Naive thymus-derived CD4-positive, alpha-beta T cell (primary cell): ENCODE measurements at regions of chrX and their contacts with region 1.

Region 1: GRCh38 chrX:56729152-56729850 is at the start of gene NBDY:
- DNase-seq: peak in 7 of 9 donors; percentile 21 to 55 (median 40)
- ATAC-seq: peak; percentile 84
- H3K4me3 ChIP-seq: peak within 1 kb of the TSS; percentile 94
- H3K4me3 Mint-ChIP-seq: peak within 1 kb of the TSS; percentile 80 to 96 (median 90)
- H3K27ac ChIP-seq: peak within 1 kb of the TSS; percentile 95
- H3K27ac Mint-ChIP-seq: peak within 1 kb of the TSS; percentile 89 to 96 (median 95)
- H3K4me1 ChIP-seq: peaks cover 0 to 3% of the 10 kb centered on the region in 2 donors
- H3K4me1 Mint-ChIP-seq: peaks cover 3 to 43% (median 34%) of the 10 kb centered on the region in 7 donors
- H3K27me3 ChIP-seq: no peaks in the 10 kb centered on the region
- H3K27me3 Mint-ChIP-seq: no peaks in the 10 kb centered on the region
- total RNA-seq, gene NBDY: 24.9 to 45.8 (median 31.7) TPM

Region 2: GRCh38 chrX:55907968-55908607 is 821.2 kb before region 1 on chrX:
- CTCF ChIA-PET with region 1: no interaction called
- POLR2A ChIA-PET with region 1: no interaction called
- intact Hi-C with region 1: loop called (anchors 5 kb)
- DNase-seq: peak; percentile 7 to 50 (median 44)
- ATAC-seq: peak; percentile 80
- H3K4me3 ChIP-seq: peak overlapping the region; percentile 83
- H3K4me3 Mint-ChIP-seq: peak overlapping the region; percentile 80 to 97 (median 94)
- H3K27ac ChIP-seq: peak overlapping the region; percentile 61
- H3K27ac Mint-ChIP-seq: peak overlapping the region; percentile 53 to 93 (median 85)
- H3K4me1 ChIP-seq: no peaks in the 10 kb centered on the region
- H3K4me1 Mint-ChIP-seq: peaks cover 6 to 32% (median 16%) of the 10 kb centered on the region in 7 donors
- H3K27me3 ChIP-seq: no peaks in the 10 kb centered on the region
- H3K27me3 Mint-ChIP-seq: no peaks in the 10 kb centered on the region

Region 3: DNA sequence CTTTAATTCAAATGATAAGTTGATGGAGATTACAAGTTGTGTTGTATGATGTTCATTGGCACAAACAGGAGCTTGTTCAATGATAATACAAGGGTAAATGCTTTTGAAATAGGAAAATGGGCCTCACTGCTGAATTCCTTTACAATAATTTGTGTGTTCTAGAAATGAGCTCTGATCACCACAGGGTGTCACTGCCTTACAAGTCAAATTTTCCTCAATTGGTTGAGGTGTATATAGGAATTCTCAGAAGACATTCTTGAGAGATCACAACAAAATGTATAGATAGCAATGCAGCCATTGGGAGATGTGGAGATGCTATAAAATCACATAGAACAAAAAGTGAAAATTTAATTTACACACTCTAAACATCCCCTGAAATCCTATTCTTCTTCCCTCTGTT is 447.5 kb before region 1 on chrX:
- CTCF ChIA-PET with region 1: interaction called, 121 read pairs
- POLR2A ChIA-PET with region 1: interaction called, 4 read pairs
- intact Hi-C with region 1: loop called (anchors 1 kb)
- DNase-seq: peak in 7 of 9 donors; percentile 15 to 60 (median 46)
- ATAC-seq: peak; percentile 55
- H3K4me3 ChIP-seq: no peak overlapping the region
- H3K4me3 Mint-ChIP-seq: peak overlapping the region in 3 of 10 donors; percentile 3 to 41 (median 14)
- H3K27ac ChIP-seq: no peak overlapping the region
- H3K27ac Mint-ChIP-seq: peak overlapping the region in 2 of 9 donors; percentile 40 to 70
- H3K4me1 ChIP-seq: peaks cover 0 to 3% of the 10 kb centered on the region in 2 donors
- H3K4me1 Mint-ChIP-seq: peaks cover 2 to 14% (median 10%) of the 10 kb centered on the region in 7 donors
- H3K27me3 ChIP-seq: no peaks in the 10 kb centered on the region
- H3K27me3 Mint-ChIP-seq: no peaks in the 10 kb centered on the region

Region 4: GRCh38 chrX:56382278-56382677 is 347.0 kb before region 1 on chrX:
- CTCF ChIA-PET with region 1: interaction called, 5 read pairs
- POLR2A ChIA-PET with region 1: no interaction called
- intact Hi-C with region 1: loop called in 1 of 2 experiments (anchors 5 kb)
- DNase-seq: peak in 1 of 9 donors; percentile 24
- ATAC-seq: no peak
- H3K4me3 ChIP-seq: no peak overlapping the region
- H3K4me3 Mint-ChIP-seq: peak overlapping the region in 6 of 10 donors; percentile 7 to 78 (median 44)
- H3K27ac ChIP-seq: no peak overlapping the region
- H3K27ac Mint-ChIP-seq: peak overlapping the region in 8 of 9 donors; percentile 29 to 92 (median 80)
- H3K4me1 ChIP-seq: peaks cover 0 to 23% of the 10 kb centered on the region in 2 donors
- H3K4me1 Mint-ChIP-seq: peaks cover 18 to 53% (median 38%) of the 10 kb centered on the region in 7 donors
- H3K27me3 ChIP-seq: no peaks in the 10 kb centered on the region
- H3K27me3 Mint-ChIP-seq: no peaks in the 10 kb centered on the region

Region 5: GRCh38 chrX:56563231-56564161 is 165.8 kb before region 1 on chrX and contains the start of gene UBQLN2:
- CTCF ChIA-PET with region 1: interaction called, 5 read pairs
- POLR2A ChIA-PET with region 1: interaction called, 6 read pairs
- intact Hi-C with region 1: loop called (anchors 1 to 2 kb)
- DNase-seq: peak; percentile 57 to 78 (median 74)
- ATAC-seq: peak; percentile 89
- H3K4me3 ChIP-seq: peak within 1 kb of the TSS; percentile 98
- H3K4me3 Mint-ChIP-seq: peak within 1 kb of the TSS; percentile 88 to 98 (median 94)
- H3K27ac ChIP-seq: peak within 1 kb of the TSS; percentile 85
- H3K27ac Mint-ChIP-seq: peak within 1 kb of the TSS; percentile 93 to 100 (median 98)
- H3K4me1 ChIP-seq: peaks cover 4 to 5% of the 10 kb centered on the region in 2 donors
- H3K4me1 Mint-ChIP-seq: peaks cover 5 to 20% (median 15%) of the 10 kb centered on the region in 7 donors
- H3K27me3 ChIP-seq: no peaks in the 10 kb centered on the region
- H3K27me3 Mint-ChIP-seq: no peaks in the 10 kb centered on the region
- total RNA-seq, gene UBQLN2: 48.8 to 76.5 (median 56.8) TPM

Region 6: GRCh38 chrX:56802921-56803849 is 73.9 kb after region 1 on chrX:
- CTCF ChIA-PET with region 1: no interaction called
- POLR2A ChIA-PET with region 1: no interaction called
- intact Hi-C with region 1: loop called in 1 of 2 experiments (anchors 2 kb)
- DNase-seq: peak; percentile 22 to 84 (median 61)
- ATAC-seq: no peak
- H3K4me3 ChIP-seq: no peak overlapping the region
- H3K4me3 Mint-ChIP-seq: peak overlapping the region in 8 of 10 donors; percentile 21 to 97 (median 92)
- H3K27ac ChIP-seq: peak overlapping the region; percentile 52
- H3K27ac Mint-ChIP-seq: peak overlapping the region; percentile 18 to 96 (median 73)
- H3K4me1 ChIP-seq: peaks cover 21 to 26% of the 10 kb centered on the region in 2 donors
- H3K4me1 Mint-ChIP-seq: peaks cover 27 to 64% (median 44%) of the 10 kb centered on the region in 7 donors
- H3K27me3 ChIP-seq: no peaks in the 10 kb centered on the region
- H3K27me3 Mint-ChIP-seq: no peaks in the 10 kb centered on the region

Region 7: GRCh38 chrX:57104400-57104799 is 375.1 kb after region 1 on chrX:
- CTCF ChIA-PET with region 1: no interaction called
- POLR2A ChIA-PET with region 1: no interaction called
- intact Hi-C with region 1: no loop called
- DNase-seq: no peak
- ATAC-seq: no peak
- H3K4me3 ChIP-seq: no peak overlapping the region
- H3K4me3 Mint-ChIP-seq: no peak overlapping the region
- H3K27ac ChIP-seq: no peak overlapping the region
- H3K27ac Mint-ChIP-seq: no peak overlapping the region
- H3K4me1 ChIP-seq: no peaks in the 10 kb centered on the region
- H3K4me1 Mint-ChIP-seq: peaks cover 0 to 6% (median 0%) of the 10 kb centered on the region in 7 donors
- H3K27me3 ChIP-seq: no peaks in the 10 kb centered on the region
- H3K27me3 Mint-ChIP-seq: no peaks in the 10 kb centered on the region

Region 8: DNA sequence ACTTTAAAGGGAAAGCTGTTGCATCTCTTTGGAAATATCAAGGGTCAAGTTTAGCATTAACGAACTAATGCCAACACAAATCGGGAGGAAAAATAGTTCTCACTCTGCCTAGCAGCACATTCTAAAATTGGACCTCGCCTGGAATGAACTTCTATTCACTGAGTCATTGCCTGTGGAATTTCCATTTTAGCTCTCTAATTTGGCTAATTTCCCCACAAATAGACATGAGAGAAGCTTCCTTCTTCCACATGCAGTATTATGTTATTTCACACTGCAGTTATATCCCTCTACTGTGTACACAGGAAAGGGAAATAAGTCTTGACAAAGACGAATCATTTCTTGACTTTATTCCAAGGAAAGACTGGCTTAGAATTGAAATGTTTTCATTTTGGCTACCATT is 1171.7 kb after region 1 on chrX:
- CTCF ChIA-PET with region 1: no interaction called
- POLR2A ChIA-PET with region 1: no interaction called
- intact Hi-C with region 1: loop called in 1 of 2 experiments (anchors 10 kb)
- DNase-seq: no peak
- ATAC-seq: no peak
- H3K4me3 ChIP-seq: no peak overlapping the region
- H3K4me3 Mint-ChIP-seq: no peak overlapping the region
- H3K27ac ChIP-seq: no peak overlapping the region
- H3K27ac Mint-ChIP-seq: no peak overlapping the region
- H3K4me1 ChIP-seq: no peaks in the 10 kb centered on the region
- H3K4me1 Mint-ChIP-seq: peaks cover 1 to 15% (median 5%) of the 10 kb centered on the region in 7 donors
- H3K27me3 ChIP-seq: no peaks in the 10 kb centered on the region
- H3K27me3 Mint-ChIP-seq: no peaks in the 10 kb centered on the region